Calu3 (cell line): ENCODE measurements at regions of chr10 and their contacts with region 1.

Region 1: GRCh38 chr10:79562135-79562756 is 2.0 kb upstream of the SFTPA2 start:
- DNase-seq: peak; percentile 87
- H3K4me3 Mint-ChIP-seq: peak overlapping the region; percentile 35
- H3K27ac Mint-ChIP-seq: no peak overlapping the region
- H3K4me1 Mint-ChIP-seq: peaks cover 32% of the 10 kb centered on the region
- H3K27me3 Mint-ChIP-seq: peaks cover 20% of the 10 kb centered on the region
- CTCF ChIP-seq: peak; percentile 88

Region 2: GRCh38 chr10:79929409-79929904 is 367.2 kb after region 1 on chr10:
- CTCF ChIA-PET with region 1: no interaction called
- intact Hi-C with region 1: loop called (anchors 2 kb)
- DNase-seq: peak; percentile 85
- H3K4me3 Mint-ChIP-seq: no peak overlapping the region
- H3K27ac Mint-ChIP-seq: no peak overlapping the region
- H3K4me1 Mint-ChIP-seq: no peaks in the 10 kb centered on the region
- H3K27me3 Mint-ChIP-seq: peaks cover 94% of the 10 kb centered on the region
- CTCF ChIP-seq: peak; percentile 89